ENCODE measurements at regions of chr1 and their contacts with region 1.

Region 1: GRCh38 chr1:25099343-25099951 is 132.9 kb downstream of the SYF2 start:
- DNase-seq: no peak
- H3K4me3 ChIP-seq: no peak overlapping the region
- CTCF ChIP-seq: no peak
- POLR2A ChIP-seq: no peak

Region 2: GRCh38 chr1:24930204-24931145 is 169.0 kb before region 1 on chr1 and contains the start of gene RUNX3:
- intact Hi-C with region 1: loop called (anchors 10 kb)
- DNase-seq: peak; percentile 49 to 94
- H3K4me3 ChIP-seq: peak within 1 kb of the TSS; percentile 25
- CTCF ChIP-seq: no peak
- POLR2A ChIP-seq: no peak
- total RNA-seq, gene RUNX3: 6.1 to 24.4 (median 19.8) TPM

Region 3: DNA sequence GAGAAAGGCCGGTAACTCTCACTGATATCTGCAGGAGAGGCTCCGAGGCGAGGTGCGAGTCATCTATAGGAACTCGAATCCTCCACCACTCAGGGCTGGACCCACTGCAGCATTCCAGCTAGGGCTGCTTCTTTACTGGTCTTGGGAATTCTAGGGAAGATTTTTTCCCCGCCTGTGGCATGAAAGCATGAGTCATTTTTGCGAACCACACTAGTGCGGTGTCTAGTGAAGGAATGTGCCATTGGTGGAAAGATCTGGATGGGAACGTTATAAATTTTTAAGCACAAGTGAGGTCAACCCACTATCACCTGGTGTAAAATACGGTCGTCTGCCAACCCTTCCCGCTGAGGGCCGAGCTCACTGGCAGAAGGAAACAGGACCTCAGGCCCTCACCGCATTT is 83.2 kb after region 1 on chr1:
- intact Hi-C with region 1: no loop called
- DNase-seq: peak in 1 of 2 donors; percentile 46
- H3K4me3 ChIP-seq: no peak overlapping the region
- CTCF ChIP-seq: no peak
- POLR2A ChIP-seq: no peak

Region 4: DNA sequence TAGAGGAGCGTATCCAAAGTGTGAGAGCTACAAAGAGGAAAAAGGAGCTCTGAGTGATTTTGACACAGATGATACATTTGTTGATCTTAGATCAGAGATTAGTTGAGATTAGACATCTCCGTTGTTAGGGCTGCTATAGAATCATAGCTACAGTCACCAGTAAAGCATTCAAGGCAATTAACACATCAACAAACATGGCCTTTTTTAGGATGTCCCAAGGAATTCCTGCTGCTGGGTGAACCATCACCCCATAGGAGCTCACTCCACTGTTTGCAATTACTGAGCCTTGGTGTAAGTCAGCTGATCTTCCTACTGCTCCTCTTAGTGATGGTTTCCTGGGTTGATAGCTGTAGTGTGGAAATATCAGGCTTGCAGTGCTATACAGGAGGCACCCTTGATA is 154.5 kb after region 1 on chr1:
- intact Hi-C with region 1: no loop called
- DNase-seq: no peak
- H3K4me3 ChIP-seq: no peak overlapping the region
- CTCF ChIP-seq: no peak
- POLR2A ChIP-seq: no peak

Measured in lower leg skin (tissue), 4 donors.